ENCODE measurements at regions of chr16 and their contacts with region 1.

Region 1: DNA sequence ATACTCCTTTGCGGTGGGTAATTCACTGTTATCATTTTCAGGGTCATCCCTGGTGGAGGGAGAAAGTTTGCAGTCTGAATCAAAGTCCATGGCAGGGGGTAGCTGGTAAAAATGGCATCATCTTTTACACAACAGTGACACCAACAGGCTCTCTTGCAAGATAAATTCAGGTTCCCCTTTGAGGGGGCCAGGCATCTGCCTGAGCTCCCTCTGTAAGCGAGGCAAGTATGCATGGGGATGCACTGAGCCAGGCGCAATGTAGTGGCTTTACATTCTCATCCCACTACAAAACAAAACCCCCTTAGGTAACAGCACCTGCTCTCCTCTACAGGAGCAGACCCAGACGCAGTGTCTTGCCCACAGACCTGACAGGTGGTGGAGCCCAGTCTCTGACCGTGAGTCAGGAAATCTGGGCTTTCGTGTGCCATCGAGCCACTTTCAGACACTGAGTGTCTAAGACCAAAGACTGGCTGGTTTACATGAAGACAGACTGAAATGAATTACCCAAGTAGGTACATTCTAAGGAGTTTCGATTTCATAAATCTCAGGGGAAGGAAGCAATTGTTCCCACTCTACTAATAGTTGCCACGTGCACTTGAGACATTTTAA is 17.7 kb downstream of the LITAFD start:
- DNase-seq: no peak
- H3K4me3 Mint-ChIP-seq: no peak overlapping the region
- H3K27ac Mint-ChIP-seq: no peak overlapping the region
- H3K4me1 Mint-ChIP-seq: no peaks in the 10 kb centered on the region
- H3K27me3 Mint-ChIP-seq: no peaks in the 10 kb centered on the region

Region 2: GRCh38 chr16:8885674-8886592 is 13.9 kb before region 1 on chr16:
- intact Hi-C with region 1: no loop called
- DNase-seq: no peak
- H3K4me3 Mint-ChIP-seq: no peak overlapping the region
- H3K27ac Mint-ChIP-seq: no peak overlapping the region
- H3K4me1 Mint-ChIP-seq: no peaks in the 10 kb centered on the region
- H3K27me3 Mint-ChIP-seq: peaks cover 2% of the 10 kb centered on the region

Region 3: GRCh38 chr16:8936421-8936820 is 36.6 kb after region 1 on chr16:
- intact Hi-C with region 1: loop called (anchors 5 kb)
- DNase-seq: peak; percentile 91
- H3K4me3 Mint-ChIP-seq: no peak overlapping the region
- H3K27ac Mint-ChIP-seq: peak overlapping the region; percentile 32
- H3K4me1 Mint-ChIP-seq: peaks cover 48% of the 10 kb centered on the region
- H3K27me3 Mint-ChIP-seq: no peaks in the 10 kb centered on the region